Heart left ventricle (tissue), 16 donors: ENCODE measurements at regions of chr16 and their contacts with region 1.

Region 1: GRCh38 chr16:82626791-82627261 is at the start of gene CDH13:
- DNase-seq: peak; percentile 41 to 66 (median 52)
- ATAC-seq: peak; percentile 36 to 64 (median 48)
- H3K4me3 ChIP-seq: peak within 1 kb of the TSS; percentile 59 to 91 (median 82)
- H3K27ac ChIP-seq: peak within 1 kb of the TSS; percentile 71 to 96 (median 88)
- H3K4me1 ChIP-seq: peaks cover 21 to 57% (median 44%) of the 10 kb centered on the region in 12 donors
- H3K27me3 ChIP-seq: peaks cover 0 to 21% (median 0%) of the 10 kb centered on the region in 9 donors
- CTCF ChIP-seq: no peak
- POLR2A ChIP-seq: peak in 1 of 2 donors; percentile 75
- total RNA-seq, gene CDH13: 101 to 172 (median 139) TPM

Region 2: DNA sequence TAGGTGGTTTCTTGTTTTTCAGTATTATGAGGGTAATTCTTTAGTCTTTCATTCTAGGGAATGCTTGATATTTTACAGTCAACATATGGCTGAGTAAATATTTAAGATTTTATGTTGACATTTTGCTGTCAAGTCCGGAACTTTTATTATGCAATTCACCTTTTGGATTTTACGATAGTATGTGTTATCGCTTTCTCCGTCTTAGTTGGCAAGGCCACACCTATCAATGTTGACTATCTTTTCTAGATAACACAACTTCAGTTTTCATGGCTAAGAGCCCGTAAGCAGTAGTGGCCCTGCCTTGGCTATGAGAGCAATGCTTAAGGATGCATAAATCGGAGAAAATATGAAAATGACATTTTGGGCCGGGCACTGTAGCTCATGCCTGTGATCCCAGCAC is 39.5 kb before region 1 on chr16:
- intact Hi-C with region 1: no loop called
- DNase-seq: no peak
- ATAC-seq: no peak
- H3K4me3 ChIP-seq: no peak overlapping the region
- H3K27ac ChIP-seq: no peak overlapping the region
- H3K4me1 ChIP-seq: peaks cover 0 to 7% (median 0%) of the 10 kb centered on the region in 12 donors
- H3K27me3 ChIP-seq: no peaks in the 10 kb centered on the region
- CTCF ChIP-seq: no peak
- POLR2A ChIP-seq: no peak

Region 3: GRCh38 chr16:82699711-82700495 is 73.1 kb after region 1 on chr16:
- intact Hi-C with region 1: loop called in 1 of 10 experiments (anchors 5 kb)
- DNase-seq: peak in 4 of 5 donors; percentile 37 to 50 (median 44)
- ATAC-seq: peak; percentile 76 to 81 (median 80)
- H3K4me3 ChIP-seq: peak overlapping the region in 1 of 12 donors; percentile 11
- H3K27ac ChIP-seq: peak overlapping the region; percentile 64 to 90 (median 82)
- H3K4me1 ChIP-seq: peaks cover 7 to 65% (median 52%) of the 10 kb centered on the region in 12 donors
- H3K27me3 ChIP-seq: no peaks in the 10 kb centered on the region
- CTCF ChIP-seq: no peak
- POLR2A ChIP-seq: no peak

Region 4: DNA sequence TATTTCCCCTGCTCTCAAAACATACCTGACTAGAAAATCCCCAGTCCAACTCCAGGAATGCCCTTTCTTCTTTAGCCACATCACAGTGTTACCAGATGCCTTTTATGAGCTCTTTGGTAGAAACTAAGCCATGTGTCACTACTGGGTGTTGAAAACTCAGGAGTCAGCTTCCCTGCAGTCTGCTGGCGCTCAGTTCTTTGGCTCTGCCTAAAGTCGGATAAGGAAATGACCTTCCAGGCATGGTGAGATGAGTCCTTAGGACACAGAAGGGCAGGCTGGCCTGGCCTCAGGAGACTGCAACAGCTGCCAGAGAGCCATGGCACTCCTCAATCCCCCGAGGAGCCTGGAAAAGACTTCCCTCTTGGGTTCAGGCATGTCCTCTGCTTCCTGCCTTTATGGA is 89.0 kb after region 1 on chr16:
- intact Hi-C with region 1: loop called in 2 of 10 experiments (anchors 1 to 5 kb)
- DNase-seq: peak; percentile 52 to 86 (median 70)
- ATAC-seq: peak; percentile 89 to 96 (median 95)
- H3K4me3 ChIP-seq: peak overlapping the region in 2 of 12 donors; percentile 33
- H3K27ac ChIP-seq: peak overlapping the region; percentile 51 to 86 (median 75)
- H3K4me1 ChIP-seq: peaks cover 0 to 39% (median 25%) of the 10 kb centered on the region in 12 donors
- H3K27me3 ChIP-seq: no peaks in the 10 kb centered on the region
- CTCF ChIP-seq: no peak
- POLR2A ChIP-seq: no peak

Region 5: DNA sequence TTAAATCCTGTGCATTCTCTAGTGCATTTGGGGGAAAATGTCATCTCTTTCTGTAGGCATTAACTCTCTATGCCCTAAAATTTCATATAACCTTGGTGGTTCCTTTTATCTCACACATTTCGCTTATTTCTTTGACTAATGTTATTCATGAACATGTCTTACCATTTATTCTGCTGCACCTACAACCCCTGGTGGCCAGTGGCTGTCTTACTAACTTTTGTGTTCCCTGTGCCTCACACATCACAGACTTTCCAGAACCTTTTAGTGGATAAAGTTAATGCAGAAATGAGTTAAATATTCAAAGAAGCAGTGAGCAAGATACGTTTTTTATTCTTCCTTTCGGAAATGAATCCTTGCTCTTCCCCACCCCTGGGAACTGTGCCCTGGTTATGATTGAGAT is 111.9 kb after region 1 on chr16:
- intact Hi-C with region 1: loop called in 6 of 10 experiments (anchors 5 to 10 kb)
- DNase-seq: peak in 1 of 5 donors; percentile 28
- ATAC-seq: no peak
- H3K4me3 ChIP-seq: no peak overlapping the region
- H3K27ac ChIP-seq: peak overlapping the region in 7 of 12 donors; percentile 22 to 90 (median 86)
- H3K4me1 ChIP-seq: peaks cover 8 to 51% (median 25%) of the 10 kb centered on the region in 12 donors
- H3K27me3 ChIP-seq: no peaks in the 10 kb centered on the region
- CTCF ChIP-seq: peak in 11 of 12 donors; percentile 15 to 56 (median 41)
- POLR2A ChIP-seq: no peak

Region 6: DNA sequence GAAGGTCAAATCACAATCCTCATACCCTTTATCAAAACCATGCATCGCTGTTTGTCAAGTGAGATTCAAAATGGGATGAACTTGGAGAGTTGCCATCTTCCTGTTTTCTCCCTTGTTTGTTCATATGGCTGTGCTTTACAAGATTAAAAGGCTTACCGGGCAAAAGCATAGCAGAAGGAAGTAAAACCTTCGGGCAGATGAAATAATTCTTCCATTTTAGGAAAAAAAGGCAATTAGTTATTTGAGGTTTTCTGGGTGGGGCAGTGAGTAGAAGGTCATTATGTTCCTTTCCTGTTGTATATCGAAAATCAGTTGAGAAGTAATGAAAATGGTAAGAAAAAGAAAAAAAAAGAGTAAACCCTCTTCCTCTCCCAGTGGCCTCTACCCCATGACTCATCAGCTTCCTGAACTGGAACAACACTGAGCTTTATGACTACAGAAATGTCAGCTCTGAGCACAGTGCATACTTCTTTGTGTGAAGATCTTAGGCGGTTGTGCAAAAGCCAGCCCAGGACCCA is 369.2 kb after region 1 on chr16:
- intact Hi-C with region 1: loop called in 2 of 10 experiments (anchors 10 kb)
- DNase-seq: peak in 2 of 5 donors; percentile 30 to 34
- ATAC-seq: peak in 3 of 4 donors; percentile 80 to 90 (median 86)
- H3K4me3 ChIP-seq: peak overlapping the region in 6 of 12 donors; percentile 9 to 31 (median 24)
- H3K27ac ChIP-seq: peak overlapping the region in 10 of 12 donors; percentile 2 to 78 (median 50)
- H3K4me1 ChIP-seq: peaks cover 0 to 17% (median 4%) of the 10 kb centered on the region in 12 donors
- H3K27me3 ChIP-seq: no peaks in the 10 kb centered on the region
- CTCF ChIP-seq: no peak
- POLR2A ChIP-seq: no peak

Region 7: GRCh38 chr16:83068686-83069085 is 441.9 kb after region 1 on chr16:
- intact Hi-C with region 1: loop called in 3 of 10 experiments (anchors 5 to 10 kb)
- DNase-seq: no peak
- ATAC-seq: peak in 1 of 4 donors; percentile 13
- H3K4me3 ChIP-seq: no peak overlapping the region
- H3K27ac ChIP-seq: no peak overlapping the region
- H3K4me1 ChIP-seq: peaks cover 0 to 8% (median 0%) of the 10 kb centered on the region in 12 donors
- H3K27me3 ChIP-seq: no peaks in the 10 kb centered on the region
- CTCF ChIP-seq: peak in 9 of 12 donors; percentile 18 to 60 (median 22)
- POLR2A ChIP-seq: no peak

Region 8: GRCh38 chr16:83449861-83450260 is 823.0 kb after region 1 on chr16:
- intact Hi-C with region 1: loop called in 3 of 10 experiments (anchors 5 to 10 kb)
- DNase-seq: no peak
- ATAC-seq: no peak
- H3K4me3 ChIP-seq: no peak overlapping the region
- H3K27ac ChIP-seq: no peak overlapping the region
- H3K4me1 ChIP-seq: no peaks in the 10 kb centered on the region
- H3K27me3 ChIP-seq: no peaks in the 10 kb centered on the region
- CTCF ChIP-seq: no peak
- POLR2A ChIP-seq: no peak